Transverse colon (tissue), 4 donors: ENCODE measurements at regions of chr6 and their contacts with region 1.

Region 1: GRCh38 chr6:110682460-110682853 is 132.8 kb downstream of the CDK19 start:
- DNase-seq: peak; percentile 66
- H3K4me3 ChIP-seq: no peak overlapping the region
- H3K27ac ChIP-seq: peak overlapping the region in 3 of 4 donors; percentile 25 to 62 (median 54)
- H3K4me1 ChIP-seq: peaks cover 3 to 22% (median 7%) of the 10 kb centered on the region in 4 donors
- H3K27me3 ChIP-seq: no peaks in the 10 kb centered on the region
- CTCF ChIP-seq: peak; percentile 62 to 84 (median 66)
- EP300 ChIP-seq: no peak
- POLR2A ChIP-seq: no peak

Region 2: DNA sequence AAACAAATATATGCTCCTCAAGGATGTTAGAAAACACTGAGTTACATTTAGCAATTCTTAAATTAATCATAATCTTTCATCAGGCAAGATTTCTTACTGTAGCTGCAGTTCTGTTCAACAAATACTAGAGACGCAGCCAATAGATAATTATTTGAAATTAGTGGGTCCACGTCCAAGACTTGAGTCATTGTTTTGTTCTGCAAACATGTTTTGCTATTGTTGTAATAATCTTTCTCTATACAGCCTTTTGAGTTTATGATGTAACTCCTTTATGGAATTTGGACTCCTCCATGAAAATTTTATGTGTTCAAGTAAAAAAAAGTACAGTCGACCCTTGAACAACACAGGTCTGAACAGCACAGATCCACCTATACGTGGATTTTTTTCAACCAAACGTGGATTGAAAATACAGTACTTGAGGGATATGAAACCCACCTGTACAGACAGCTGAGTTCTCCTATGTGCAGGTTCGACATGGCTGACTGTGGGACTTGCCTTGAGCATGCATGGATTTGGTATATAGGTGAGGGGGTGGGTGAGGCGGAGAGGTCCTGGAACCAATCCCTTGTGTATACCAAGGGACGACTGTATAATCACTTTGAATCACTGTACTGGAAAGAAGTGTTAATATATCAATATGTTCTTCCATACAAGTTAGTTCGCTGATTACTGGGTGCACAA is 164.7 kb before region 1 on chr6:
- in situ Hi-C with region 1: no loop called
- intact Hi-C with region 1: no loop called
- DNase-seq: no peak
- H3K4me3 ChIP-seq: no peak overlapping the region
- H3K27ac ChIP-seq: no peak overlapping the region
- H3K4me1 ChIP-seq: peaks cover 0 to 5% (median 0%) of the 10 kb centered on the region in 4 donors
- H3K27me3 ChIP-seq: no peaks in the 10 kb centered on the region
- CTCF ChIP-seq: no peak
- EP300 ChIP-seq: no peak
- POLR2A ChIP-seq: no peak

Region 3: DNA sequence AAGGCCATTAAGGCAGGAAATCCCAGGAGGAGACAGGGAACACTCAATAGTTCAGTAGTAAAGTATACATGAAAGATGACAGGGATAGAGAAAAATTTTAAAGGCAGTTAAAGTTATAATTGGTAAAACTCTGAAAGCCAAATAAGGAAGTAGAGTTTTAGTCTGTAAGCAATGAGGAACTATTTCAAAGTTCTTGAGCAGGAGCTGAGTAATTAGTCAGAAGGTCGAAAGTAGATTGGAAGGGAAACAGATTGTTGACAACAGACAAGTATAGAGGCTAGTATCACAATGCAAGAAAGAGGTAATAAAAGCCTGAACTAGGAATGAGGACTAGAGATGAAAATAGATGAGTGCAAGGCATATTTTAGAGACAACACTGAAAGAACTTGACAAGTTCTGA is 17.5 kb before region 1 on chr6:
- in situ Hi-C with region 1: no loop called
- intact Hi-C with region 1: no loop called
- DNase-seq: no peak
- H3K4me3 ChIP-seq: no peak overlapping the region
- H3K27ac ChIP-seq: peak overlapping the region; percentile 62 to 77 (median 64)
- H3K4me1 ChIP-seq: peaks cover 0 to 42% (median 22%) of the 10 kb centered on the region in 4 donors
- H3K27me3 ChIP-seq: no peaks in the 10 kb centered on the region
- CTCF ChIP-seq: no peak
- EP300 ChIP-seq: no peak
- POLR2A ChIP-seq: no peak

Region 4: DNA sequence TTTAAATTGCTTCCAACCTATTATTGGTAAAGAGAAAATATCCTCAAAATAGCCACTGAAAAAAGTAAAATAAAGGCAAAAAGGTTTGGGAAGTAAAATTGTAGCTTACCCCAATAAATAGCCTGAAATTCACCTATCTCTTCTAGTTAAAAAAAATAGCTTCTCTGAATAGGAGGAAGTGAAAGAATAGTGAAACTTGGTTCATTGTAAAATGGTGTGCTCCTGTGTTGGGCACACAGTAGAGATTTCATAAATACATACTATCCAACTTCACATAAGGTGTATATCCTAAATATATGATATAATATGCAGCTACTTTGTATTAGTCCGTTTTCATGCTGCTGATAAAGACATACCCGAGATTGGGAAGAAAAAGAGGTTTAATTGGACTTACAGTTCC is 87.5 kb after region 1 on chr6:
- in situ Hi-C with region 1: no loop called
- intact Hi-C with region 1: no loop called
- DNase-seq: no peak
- H3K4me3 ChIP-seq: no peak overlapping the region
- H3K27ac ChIP-seq: no peak overlapping the region
- H3K4me1 ChIP-seq: no peaks in the 10 kb centered on the region
- H3K27me3 ChIP-seq: no peaks in the 10 kb centered on the region
- CTCF ChIP-seq: no peak
- EP300 ChIP-seq: no peak
- POLR2A ChIP-seq: no peak

Region 5: GRCh38 chr6:110815217-110816109 is 133.0 kb after region 1 on chr6 and contains the start of gene CDK19:
- in situ Hi-C with region 1: loop called in 1 of 4 experiments (anchors 25 kb)
- intact Hi-C with region 1: no loop called
- DNase-seq: peak; percentile 99
- H3K4me3 ChIP-seq: peak within 1 kb of the TSS; percentile 62 to 96 (median 76)
- H3K27ac ChIP-seq: peak within 1 kb of the TSS; percentile 92 to 98 (median 95)
- H3K4me1 ChIP-seq: peaks cover 0 to 23% (median 12%) of the 10 kb centered on the region in 4 donors
- H3K27me3 ChIP-seq: no peaks in the 10 kb centered on the region
- CTCF ChIP-seq: peak in 1 of 5 experiments; percentile 13
- EP300 ChIP-seq: no peak
- POLR2A ChIP-seq: peak; percentile 91
- total RNA-seq, gene CDK19: 7.0 to 18.6 (median 14.7) TPM

Region 6: GRCh38 chr6:110873981-110874879 is 191.8 kb after region 1 on chr6 and contains the start of gene AMD1:
- in situ Hi-C with region 1: loop called in 1 of 4 experiments (anchors 10 kb)
- intact Hi-C with region 1: no loop called
- DNase-seq: peak; percentile 97
- H3K4me3 ChIP-seq: peak within 1 kb of the TSS; percentile 78 to 95 (median 90)
- H3K27ac ChIP-seq: peak within 1 kb of the TSS; percentile 94 to 99 (median 97)
- H3K4me1 ChIP-seq: peaks cover 11 to 33% (median 26%) of the 10 kb centered on the region in 4 donors
- H3K27me3 ChIP-seq: no peaks in the 10 kb centered on the region
- CTCF ChIP-seq: peak in 2 of 5 experiments; percentile 6 to 42
- EP300 ChIP-seq: no peak
- POLR2A ChIP-seq: peak; percentile 100
- total RNA-seq, gene AMD1: 50.7 to 86.4 (median 75.1) TPM

Region 7: DNA sequence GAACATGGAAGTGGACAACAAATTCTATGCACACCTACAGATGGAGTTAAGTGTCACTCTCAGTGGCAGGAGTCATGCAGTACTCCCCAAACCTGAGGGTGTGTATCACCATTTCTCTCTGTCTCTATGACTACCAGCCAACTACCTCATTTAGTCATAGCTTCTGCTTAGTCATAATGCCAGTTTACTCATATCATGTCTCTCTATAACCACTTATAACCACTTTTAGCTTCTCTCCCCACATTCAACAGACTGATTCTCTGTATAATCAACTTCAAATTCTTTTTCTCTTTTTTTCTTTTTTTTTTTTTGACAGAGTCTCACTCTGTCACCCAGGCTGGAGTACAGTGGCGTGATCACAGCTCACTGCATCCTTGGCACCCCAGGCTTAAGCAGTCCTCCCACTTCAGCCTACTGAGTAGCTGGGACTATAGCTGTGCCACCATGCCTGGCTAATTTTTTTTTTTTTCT is 262.3 kb after region 1 on chr6:
- in situ Hi-C with region 1: loop called in 1 of 4 experiments (anchors 25 kb)
- intact Hi-C with region 1: no loop called
- DNase-seq: no peak
- H3K4me3 ChIP-seq: no peak overlapping the region
- H3K27ac ChIP-seq: no peak overlapping the region
- H3K4me1 ChIP-seq: peaks cover 0 to 4% (median 0%) of the 10 kb centered on the region in 4 donors
- H3K27me3 ChIP-seq: no peaks in the 10 kb centered on the region
- CTCF ChIP-seq: no peak
- EP300 ChIP-seq: no peak
- POLR2A ChIP-seq: no peak

Region 8: GRCh38 chr6:110949679-110950285 is 267.3 kb after region 1 on chr6:
- in situ Hi-C with region 1: loop called in 3 of 4 experiments (anchors 5 to 25 kb)
- intact Hi-C with region 1: loop called (anchors 10 kb)
- DNase-seq: no peak
- H3K4me3 ChIP-seq: no peak overlapping the region
- H3K27ac ChIP-seq: no peak overlapping the region
- H3K4me1 ChIP-seq: peaks cover 0 to 10% (median 4%) of the 10 kb centered on the region in 4 donors
- H3K27me3 ChIP-seq: no peaks in the 10 kb centered on the region
- CTCF ChIP-seq: peak; percentile 49 to 68 (median 59)
- EP300 ChIP-seq: no peak
- POLR2A ChIP-seq: no peak

Region 9: GRCh38 chr6:110958329-110959192 is 276.1 kb after region 1 on chr6 and contains the start of gene GTF3C6:
- in situ Hi-C with region 1: loop called in 2 of 4 experiments (anchors 5 to 10 kb)
- intact Hi-C with region 1: loop called (anchors 10 kb)
- DNase-seq: peak; percentile 94
- H3K4me3 ChIP-seq: peak within 1 kb of the TSS; percentile 76 to 92 (median 90)
- H3K27ac ChIP-seq: peak within 1 kb of the TSS; percentile 91 to 93 (median 92)
- H3K4me1 ChIP-seq: peaks cover 0 to 20% (median 9%) of the 10 kb centered on the region in 4 donors
- H3K27me3 ChIP-seq: no peaks in the 10 kb centered on the region
- CTCF ChIP-seq: peak in 1 of 5 experiments; percentile 7
- EP300 ChIP-seq: no peak
- POLR2A ChIP-seq: peak; percentile 90
- total RNA-seq, gene GTF3C6: 13.5 to 53.4 (median 24.6) TPM